ENCODE measurements at regions of chr7 and their contacts with region 1.

Region 1: GRCh38 chr7:90155206-90155605 is 937 bp downstream of the STEAP1 start:
- DNase-seq: peak; percentile 50
- H3K4me3 Mint-ChIP-seq: peak overlapping the region; percentile 75
- H3K27ac Mint-ChIP-seq: no peak overlapping the region
- H3K4me1 Mint-ChIP-seq: peaks cover 7% of the 10 kb centered on the region
- H3K27me3 Mint-ChIP-seq: peaks cover 11% of the 10 kb centered on the region
- CTCF ChIP-seq: no peak

Region 2: GRCh38 chr7:89549768-89550167 is 605.4 kb before region 1 on chr7:
- CTCF ChIA-PET with region 1: no interaction called
- POLR2A ChIA-PET with region 1: no interaction called
- intact Hi-C with region 1: no loop called
- DNase-seq: no peak
- H3K4me3 Mint-ChIP-seq: no peak overlapping the region
- H3K27ac Mint-ChIP-seq: no peak overlapping the region
- H3K4me1 Mint-ChIP-seq: no peaks in the 10 kb centered on the region
- H3K27me3 Mint-ChIP-seq: no peaks in the 10 kb centered on the region
- CTCF ChIP-seq: no peak

Region 3: DNA sequence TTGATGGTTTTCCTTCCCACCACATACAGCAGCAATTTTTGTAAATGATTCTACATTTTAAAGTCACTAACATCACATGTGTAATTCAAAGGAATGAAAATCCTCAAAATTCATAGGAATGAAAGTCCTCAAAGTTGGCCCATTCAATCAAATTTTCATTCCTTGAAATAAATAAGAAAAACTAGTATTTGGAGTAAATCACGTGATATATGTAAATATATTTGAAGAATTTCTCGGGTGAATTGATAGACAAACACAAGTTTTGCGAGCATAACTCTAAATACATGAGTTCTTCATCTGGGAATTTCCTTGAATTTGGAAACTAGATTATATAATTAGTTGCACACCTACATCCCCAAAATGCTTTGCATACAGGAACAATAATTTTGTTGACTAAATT is 513.0 kb before region 1 on chr7:
- CTCF ChIA-PET with region 1: no interaction called
- POLR2A ChIA-PET with region 1: no interaction called
- intact Hi-C with region 1: no loop called
- DNase-seq: no peak
- H3K4me3 Mint-ChIP-seq: no peak overlapping the region
- H3K27ac Mint-ChIP-seq: no peak overlapping the region
- H3K4me1 Mint-ChIP-seq: no peaks in the 10 kb centered on the region
- H3K27me3 Mint-ChIP-seq: no peaks in the 10 kb centered on the region
- CTCF ChIP-seq: no peak

Region 4: GRCh38 chr7:90165724-90166123 is 10.5 kb after region 1 on chr7:
- CTCF ChIA-PET with region 1: interaction called, 17 read pairs
- POLR2A ChIA-PET with region 1: no interaction called
- intact Hi-C with region 1: no loop called
- DNase-seq: no peak
- H3K4me3 Mint-ChIP-seq: no peak overlapping the region
- H3K27ac Mint-ChIP-seq: no peak overlapping the region
- H3K4me1 Mint-ChIP-seq: no peaks in the 10 kb centered on the region
- H3K27me3 Mint-ChIP-seq: no peaks in the 10 kb centered on the region
- CTCF ChIP-seq: no peak

Region 5: DNA sequence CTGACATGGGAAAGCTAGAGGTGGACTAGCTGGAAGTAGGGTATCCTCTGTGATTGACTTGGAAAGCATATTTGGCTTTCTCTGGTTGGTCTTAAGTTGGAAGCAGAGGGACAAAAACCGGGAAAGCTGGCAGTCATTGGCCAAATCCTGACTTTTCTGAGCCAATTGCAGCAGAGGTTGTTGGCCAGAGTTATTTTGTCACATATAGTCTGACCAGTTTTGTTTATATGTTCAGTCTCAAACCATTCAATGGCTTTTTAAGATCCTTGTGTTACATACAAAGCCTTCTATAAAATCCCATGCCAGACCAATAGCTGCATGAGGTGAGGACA is 96.1 kb after region 1 on chr7:
- CTCF ChIA-PET with region 1: interaction called, 13 read pairs
- POLR2A ChIA-PET with region 1: no interaction called
- intact Hi-C with region 1: no loop called
- DNase-seq: no peak
- H3K4me3 Mint-ChIP-seq: no peak overlapping the region
- H3K27ac Mint-ChIP-seq: no peak overlapping the region
- H3K4me1 Mint-ChIP-seq: peaks cover 7% of the 10 kb centered on the region
- H3K27me3 Mint-ChIP-seq: no peaks in the 10 kb centered on the region
- CTCF ChIP-seq: no peak

Region 6: GRCh38 chr7:90298145-90299038 is 143.2 kb after region 1 on chr7:
- CTCF ChIA-PET with region 1: interaction called, 10 read pairs
- POLR2A ChIA-PET with region 1: no interaction called
- intact Hi-C with region 1: loop called (anchors 1 kb)
- DNase-seq: peak; percentile 74
- H3K4me3 Mint-ChIP-seq: no peak overlapping the region
- H3K27ac Mint-ChIP-seq: no peak overlapping the region
- H3K4me1 Mint-ChIP-seq: no peaks in the 10 kb centered on the region
- H3K27me3 Mint-ChIP-seq: no peaks in the 10 kb centered on the region
- CTCF ChIP-seq: peak; percentile 44

Region 7: GRCh38 chr7:90430614-90431471 is 275.6 kb after region 1 on chr7:
- CTCF ChIA-PET with region 1: interaction called, 58 read pairs
- POLR2A ChIA-PET with region 1: no interaction called
- intact Hi-C with region 1: no loop called
- DNase-seq: no peak
- H3K4me3 Mint-ChIP-seq: no peak overlapping the region
- H3K27ac Mint-ChIP-seq: no peak overlapping the region
- H3K4me1 Mint-ChIP-seq: no peaks in the 10 kb centered on the region
- H3K27me3 Mint-ChIP-seq: peaks cover 10% of the 10 kb centered on the region
- CTCF ChIP-seq: no peak